B cell (primary cell): ENCODE measurements at regions of chr2 and their contacts with region 1.

Region 1: DNA sequence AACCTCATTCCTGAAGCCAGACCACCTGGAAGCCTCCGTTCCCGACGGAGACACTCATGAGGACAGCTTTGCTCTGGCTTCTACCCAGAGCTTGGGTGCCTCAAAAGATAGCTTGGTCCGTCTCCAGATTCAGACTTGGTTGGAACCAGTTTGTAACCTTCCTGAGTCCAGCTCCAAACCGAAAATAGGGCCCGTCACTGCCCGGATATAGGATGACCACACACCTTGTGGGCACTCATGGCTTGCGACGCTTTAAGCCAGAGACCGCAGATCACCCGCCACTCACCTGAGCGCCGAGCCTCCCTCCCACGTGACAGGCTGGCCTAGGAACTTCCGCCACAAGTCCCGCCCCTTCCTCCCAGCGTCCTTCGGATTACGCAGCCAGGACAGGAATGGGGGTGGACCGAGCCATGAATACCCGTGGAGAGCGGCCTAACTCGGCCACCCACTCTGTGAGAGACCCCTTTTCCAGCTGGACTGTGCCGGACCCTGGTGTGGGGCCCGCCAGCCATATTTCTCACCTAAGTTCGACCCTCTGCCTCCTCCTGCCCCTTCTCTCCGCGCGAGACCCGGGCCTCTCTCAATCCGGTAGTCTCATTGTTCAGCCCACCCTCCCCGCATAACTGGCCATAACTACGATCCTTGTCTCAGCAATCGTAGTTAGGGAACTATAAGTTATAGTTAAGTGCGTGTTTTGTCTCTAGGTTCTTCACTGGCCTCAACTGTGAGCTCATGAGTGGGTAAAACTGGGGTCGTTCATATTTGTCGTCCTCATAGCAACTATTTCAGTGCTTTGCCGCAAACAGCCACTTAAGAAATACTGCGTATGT is at the start of gene MPV17:
- DNase-seq: peak; percentile 91
- ATAC-seq: peak; percentile 95
- H3K4me3 ChIP-seq: peak within 1 kb of the TSS; percentile 72 to 99 (median 93)
- H3K4me3 Mint-ChIP-seq: peak within 1 kb of the TSS; percentile 99
- H3K27ac ChIP-seq: peak within 1 kb of the TSS; percentile 75 to 96
- H3K27ac Mint-ChIP-seq: peak within 1 kb of the TSS; percentile 97
- H3K4me1 ChIP-seq: peaks cover 12 to 20% of the 10 kb centered on the region in 2 donors
- H3K4me1 Mint-ChIP-seq: peaks cover 27% of the 10 kb centered on the region
- H3K27me3 ChIP-seq: no peaks in the 10 kb centered on the region
- H3K27me3 Mint-ChIP-seq: no peaks in the 10 kb centered on the region
- CTCF ChIP-seq: no peak
- total RNA-seq, gene MPV17: 103 and 111 TPM in 2 replicates

Region 2: DNA sequence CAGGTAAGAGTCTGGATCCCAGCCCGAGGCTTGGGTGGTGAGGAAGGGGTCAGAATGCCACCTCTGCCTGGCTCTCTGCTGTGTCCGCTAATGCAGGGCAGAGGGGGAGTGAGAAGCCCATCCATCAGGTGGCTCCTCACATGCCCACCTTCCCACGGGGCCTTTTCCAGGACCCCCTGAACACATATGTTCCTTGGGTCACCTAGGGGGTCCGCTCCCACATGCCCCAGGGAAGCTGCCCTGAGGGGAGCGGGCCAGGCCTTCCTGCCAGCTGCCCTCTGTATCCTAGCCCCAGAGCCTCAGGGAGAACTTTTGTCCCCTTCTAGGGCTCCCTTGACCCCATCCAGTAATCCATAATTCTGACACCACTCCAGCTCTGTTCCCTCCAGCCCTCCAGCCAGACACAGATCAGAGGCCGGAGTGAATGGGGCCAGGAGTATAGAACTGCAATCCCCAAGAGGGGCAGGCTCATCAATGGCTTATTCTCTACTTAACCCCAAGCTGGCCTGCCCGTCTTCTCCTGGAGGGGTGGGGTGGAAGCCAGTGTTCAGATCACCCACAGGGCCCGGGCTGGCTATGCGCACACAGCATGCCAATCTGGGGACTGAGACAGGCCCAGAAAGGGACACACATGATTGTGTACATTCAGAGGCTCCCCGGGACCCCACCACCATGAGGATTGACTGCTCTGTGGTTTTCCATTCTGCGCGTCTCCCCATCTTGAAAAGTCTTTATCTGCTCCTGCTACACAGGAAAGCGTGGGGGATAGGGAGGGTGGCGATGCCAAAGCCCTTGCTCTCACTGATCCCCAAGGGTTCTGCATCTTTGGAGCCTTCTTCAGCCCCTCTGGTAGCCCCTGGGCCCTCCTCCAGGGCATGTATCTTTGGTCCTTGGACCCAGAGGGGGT is 243.5 kb before region 1 on chr2:
- CTCF ChIA-PET with region 1: no interaction called
- POLR2A ChIA-PET with region 1: no interaction called
- intact Hi-C with region 1: loop called (anchors 2 kb)
- DNase-seq: no peak
- ATAC-seq: no peak
- H3K4me3 ChIP-seq: no peak overlapping the region
- H3K4me3 Mint-ChIP-seq: no peak overlapping the region
- H3K27ac ChIP-seq: no peak overlapping the region
- H3K27ac Mint-ChIP-seq: no peak overlapping the region
- H3K4me1 ChIP-seq: peaks cover 27 to 37% of the 10 kb centered on the region in 2 donors
- H3K4me1 Mint-ChIP-seq: peaks cover 37% of the 10 kb centered on the region
- H3K27me3 ChIP-seq: peaks cover 0 to 11% (median 4%) of the 10 kb centered on the region in 4 experiments
- H3K27me3 Mint-ChIP-seq: no peaks in the 10 kb centered on the region
- CTCF ChIP-seq: no peak

Region 3: GRCh38 chr2:27091746-27092695 is 231.0 kb before region 1 on chr2:
- CTCF ChIA-PET with region 1: no interaction called
- POLR2A ChIA-PET with region 1: no interaction called
- intact Hi-C with region 1: no loop called
- DNase-seq: no peak
- ATAC-seq: no peak
- H3K4me3 ChIP-seq: no peak overlapping the region
- H3K4me3 Mint-ChIP-seq: no peak overlapping the region
- H3K27ac ChIP-seq: no peak overlapping the region
- H3K27ac Mint-ChIP-seq: no peak overlapping the region
- H3K4me1 ChIP-seq: peaks cover 9 to 13% of the 10 kb centered on the region in 2 donors
- H3K4me1 Mint-ChIP-seq: peaks cover 19% of the 10 kb centered on the region
- H3K27me3 ChIP-seq: no peaks in the 10 kb centered on the region
- H3K27me3 Mint-ChIP-seq: no peaks in the 10 kb centered on the region
- CTCF ChIP-seq: no peak

Region 4: DNA sequence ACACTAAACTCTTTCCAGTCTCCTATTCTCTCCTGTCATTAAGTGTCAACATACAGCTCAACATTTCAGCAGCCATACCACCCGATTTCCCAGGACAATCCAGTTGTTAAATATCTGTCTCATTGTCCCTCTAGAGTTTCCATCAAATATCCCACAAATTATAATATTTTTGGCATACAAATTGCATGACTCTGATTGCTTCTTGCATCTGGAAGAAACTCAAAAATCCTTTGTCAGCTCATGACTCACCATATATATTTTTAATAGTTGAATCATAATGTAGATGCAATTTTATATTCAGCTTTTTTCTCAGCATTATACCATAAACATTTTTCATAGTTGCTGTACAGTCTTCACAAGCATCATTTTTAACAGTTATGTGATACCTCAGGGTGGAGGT is 67.3 kb before region 1 on chr2:
- CTCF ChIA-PET with region 1: no interaction called
- POLR2A ChIA-PET with region 1: no interaction called
- intact Hi-C with region 1: no loop called
- DNase-seq: no peak
- ATAC-seq: no peak
- H3K4me3 ChIP-seq: no peak overlapping the region
- H3K4me3 Mint-ChIP-seq: no peak overlapping the region
- H3K27ac ChIP-seq: no peak overlapping the region
- H3K27ac Mint-ChIP-seq: no peak overlapping the region
- H3K4me1 ChIP-seq: no peaks in the 10 kb centered on the region
- H3K4me1 Mint-ChIP-seq: no peaks in the 10 kb centered on the region
- H3K27me3 ChIP-seq: peaks cover 0 to 65% (median 16%) of the 10 kb centered on the region in 4 experiments
- H3K27me3 Mint-ChIP-seq: peaks cover 69% of the 10 kb centered on the region
- CTCF ChIP-seq: no peak

Region 5: DNA sequence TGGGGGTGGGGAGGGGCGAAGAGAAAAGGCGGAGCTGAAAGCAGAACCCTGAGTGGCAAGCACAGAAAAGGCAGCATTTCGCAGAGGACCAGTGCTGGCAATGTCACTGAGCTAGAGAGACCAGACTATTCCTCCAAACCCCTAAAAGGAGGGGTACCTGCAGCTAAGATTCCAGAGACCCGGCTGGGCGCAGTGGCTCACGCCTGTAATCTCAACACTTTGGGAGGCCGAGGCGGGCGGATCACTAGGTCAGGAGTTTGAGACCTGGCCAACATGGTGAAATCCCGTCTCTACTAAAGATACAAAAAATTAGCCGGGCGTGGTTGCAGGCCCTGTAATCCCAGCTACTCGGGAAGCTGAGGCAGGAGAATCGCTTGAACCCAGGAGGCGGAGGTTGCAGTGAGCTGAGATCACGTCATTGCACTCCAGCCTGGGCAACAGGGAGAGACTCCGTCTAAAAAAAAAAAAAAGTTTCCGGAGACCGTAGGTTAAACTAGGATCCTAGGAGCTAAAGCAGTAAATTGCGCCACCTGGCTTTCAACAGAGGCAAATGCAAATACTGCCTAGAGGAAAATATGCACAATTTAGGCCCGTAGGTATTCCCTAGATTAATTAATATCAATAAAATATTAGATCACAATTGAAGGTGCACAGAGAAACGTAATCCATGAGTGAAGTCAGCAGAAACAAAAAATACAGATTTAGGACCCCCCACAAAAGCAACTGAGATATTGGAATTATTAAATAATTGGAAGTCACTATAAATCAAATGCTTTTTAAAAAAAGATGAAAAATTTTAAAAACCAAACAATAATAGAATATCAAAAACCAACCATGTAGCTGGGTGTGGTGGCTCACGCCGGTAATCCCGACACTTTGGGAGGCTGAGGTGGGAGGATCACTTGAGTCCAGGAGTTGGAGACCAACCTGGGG is 19.6 kb before region 1 on chr2:
- CTCF ChIA-PET with region 1: interaction called, 24 read pairs
- POLR2A ChIA-PET with region 1: no interaction called
- intact Hi-C with region 1: loop called (anchors 2 kb)
- DNase-seq: peak; percentile 70
- ATAC-seq: peak; percentile 74
- H3K4me3 ChIP-seq: peak overlapping the region in 4 of 5 experiments; percentile 7 to 38 (median 26)
- H3K4me3 Mint-ChIP-seq: peak overlapping the region; percentile 74
- H3K27ac ChIP-seq: peak overlapping the region in 1 of 2 donors; percentile 26
- H3K27ac Mint-ChIP-seq: peak overlapping the region; percentile 71
- H3K4me1 ChIP-seq: peaks cover 14 to 22% of the 10 kb centered on the region in 2 donors
- H3K4me1 Mint-ChIP-seq: peaks cover 11% of the 10 kb centered on the region
- H3K27me3 ChIP-seq: peaks cover 0 to 36% (median 10%) of the 10 kb centered on the region in 4 experiments
- H3K27me3 Mint-ChIP-seq: peaks cover 26% of the 10 kb centered on the region
- CTCF ChIP-seq: peak; percentile 96

Region 6: DNA sequence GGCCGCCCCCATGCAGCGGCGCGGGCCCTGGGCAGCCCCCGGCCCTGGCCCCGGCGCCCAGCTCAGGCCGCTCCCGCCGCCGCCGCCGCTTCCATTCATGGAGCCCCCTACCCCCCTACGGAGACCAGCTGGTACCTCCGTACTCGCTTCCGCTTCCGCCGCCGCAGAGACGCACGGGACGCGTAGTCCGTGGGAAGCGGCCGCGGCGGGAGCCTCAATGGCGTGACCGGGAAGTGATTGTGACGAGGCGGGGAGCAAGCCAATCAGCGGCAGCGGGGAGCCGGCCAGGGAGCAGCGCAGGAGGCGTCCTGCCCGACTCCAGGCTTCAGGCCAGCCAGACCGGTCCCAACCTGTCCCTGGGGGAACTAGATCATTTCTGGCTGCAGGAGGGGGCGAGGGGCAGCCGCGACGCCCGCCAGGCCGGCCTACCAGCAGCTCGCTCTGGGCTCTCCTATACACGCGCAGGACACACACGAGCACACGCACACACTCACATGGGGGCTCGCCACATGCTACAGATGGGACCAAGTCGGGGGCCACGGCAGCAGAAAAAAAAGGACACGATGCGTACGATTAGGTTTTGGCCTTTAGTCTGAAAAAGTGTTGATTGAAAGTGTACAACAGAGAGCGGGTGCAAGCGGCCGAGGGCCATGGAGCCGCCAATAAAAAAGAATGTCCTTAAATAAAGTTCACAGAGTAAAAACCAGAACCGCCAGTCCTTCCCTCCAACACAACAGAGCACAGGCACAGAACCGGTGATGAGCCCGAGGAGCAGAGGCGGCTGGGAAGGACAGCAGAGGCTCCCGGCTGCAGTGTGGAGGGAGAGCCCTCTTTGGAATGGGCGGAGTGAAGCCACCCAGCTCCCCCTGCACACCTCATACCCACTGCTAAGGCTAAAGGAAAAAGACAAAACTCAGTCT is 57.9 kb after region 1 on chr2 and contains the start of gene ZNF513:
- CTCF ChIA-PET with region 1: no interaction called
- POLR2A ChIA-PET with region 1: interaction called, 5 read pairs
- intact Hi-C with region 1: loop called (anchors 2 kb)
- DNase-seq: peak; percentile 92
- ATAC-seq: peak; percentile 94
- H3K4me3 ChIP-seq: peak within 1 kb of the TSS; percentile 40 to 66 (median 63)
- H3K4me3 Mint-ChIP-seq: peak within 1 kb of the TSS; percentile 94
- H3K27ac ChIP-seq: peak within 1 kb of the TSS; percentile 56 to 94
- H3K27ac Mint-ChIP-seq: peak within 1 kb of the TSS; percentile 96
- H3K4me1 ChIP-seq: peaks cover 16 to 20% of the 10 kb centered on the region in 2 donors
- H3K4me1 Mint-ChIP-seq: peaks cover 30% of the 10 kb centered on the region
- H3K27me3 ChIP-seq: no peaks in the 10 kb centered on the region
- H3K27me3 Mint-ChIP-seq: no peaks in the 10 kb centered on the region
- CTCF ChIP-seq: no peak
- total RNA-seq, gene ZNF513: 29.0 and 31.7 TPM in 2 replicates

Region 7: GRCh38 chr2:27428213-27428977 is 105.4 kb after region 1 on chr2 and contains the start of gene NRBP1:
- CTCF ChIA-PET with region 1: no interaction called
- POLR2A ChIA-PET with region 1: interaction called, 3 read pairs
- intact Hi-C with region 1: loop called (anchors 1 kb)
- DNase-seq: peak; percentile 95
- ATAC-seq: peak; percentile 92
- H3K4me3 ChIP-seq: peak within 1 kb of the TSS; percentile 68 to 98 (median 88)
- H3K4me3 Mint-ChIP-seq: peak within 1 kb of the TSS; percentile 97
- H3K27ac ChIP-seq: peak within 1 kb of the TSS; percentile 82 to 86
- H3K27ac Mint-ChIP-seq: peak within 1 kb of the TSS; percentile 97
- H3K4me1 ChIP-seq: peaks cover 15 to 21% of the 10 kb centered on the region in 2 donors
- H3K4me1 Mint-ChIP-seq: peaks cover 29% of the 10 kb centered on the region
- H3K27me3 ChIP-seq: no peaks in the 10 kb centered on the region
- H3K27me3 Mint-ChIP-seq: no peaks in the 10 kb centered on the region
- CTCF ChIP-seq: no peak
- total RNA-seq, gene NRBP1: 109 and 115 TPM in 2 replicates

Region 8: GRCh38 chr2:28392297-28393113 is 1069.5 kb after region 1 on chr2 and contains the start of gene FOSL2:
- CTCF ChIA-PET with region 1: no interaction called
- POLR2A ChIA-PET with region 1: no interaction called
- intact Hi-C with region 1: loop called (anchors 5 kb)
- DNase-seq: peak; percentile 84
- ATAC-seq: peak; percentile 78
- H3K4me3 ChIP-seq: peak within 1 kb of the TSS; percentile 42 to 90 (median 61)
- H3K4me3 Mint-ChIP-seq: peak within 1 kb of the TSS; percentile 89
- H3K27ac ChIP-seq: peak within 1 kb of the TSS; percentile 6 to 52
- H3K27ac Mint-ChIP-seq: peak within 1 kb of the TSS; percentile 87
- H3K4me1 ChIP-seq: peaks cover 18% of the 10 kb centered on the region in 2 donors
- H3K4me1 Mint-ChIP-seq: peaks cover 25% of the 10 kb centered on the region
- H3K27me3 ChIP-seq: peaks cover 0 to 31% (median 4%) of the 10 kb centered on the region in 4 experiments
- H3K27me3 Mint-ChIP-seq: peaks cover 17% of the 10 kb centered on the region
- CTCF ChIP-seq: no peak
- total RNA-seq, gene FOSL2: 37.7 and 42.2 TPM in 2 replicates